ENCODE measurements at regions of chr4 and their contacts with region 1.

Region 1: DNA sequence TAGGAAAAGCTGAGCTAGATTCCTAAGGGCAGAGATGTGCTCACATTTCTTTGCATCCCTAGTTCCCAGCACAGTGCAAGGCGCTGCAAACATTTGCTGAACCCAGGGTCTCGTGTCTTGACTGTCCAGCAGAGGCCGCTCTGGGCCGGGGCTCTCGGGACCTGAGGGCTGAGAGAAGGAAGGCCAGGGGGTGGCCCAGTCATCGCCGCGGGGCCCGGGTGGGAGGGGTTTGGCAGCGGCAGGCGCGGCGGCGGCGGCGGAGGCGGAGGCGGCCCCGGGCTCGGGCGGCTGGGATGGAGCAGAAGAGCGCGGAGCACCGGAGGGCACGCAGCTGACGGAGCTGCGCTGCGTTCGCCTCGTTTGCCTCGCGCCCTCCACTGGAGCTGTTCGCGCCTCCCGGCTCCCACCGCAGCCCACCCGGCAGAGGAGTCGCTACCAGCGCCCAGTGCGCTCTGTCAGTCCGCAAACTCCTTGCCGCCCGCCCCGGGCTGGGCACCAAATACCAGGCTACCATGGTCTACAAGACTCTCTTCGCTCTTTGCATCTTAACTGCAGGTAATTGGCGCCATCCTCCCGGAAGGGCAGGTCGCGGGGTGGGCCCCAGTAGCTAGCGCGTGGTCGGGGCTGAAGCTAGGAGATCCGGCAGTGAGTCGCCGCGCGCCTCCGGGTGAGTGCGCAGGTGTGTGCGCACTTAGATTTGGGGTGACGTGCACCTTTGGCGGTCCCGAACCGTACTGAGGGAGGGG is at the start of gene PARM1:
- DNase-seq: peak; percentile 97
- H3K4me3 ChIP-seq: peak within 1 kb of the TSS; percentile 59 to 76 (median 70)
- H3K27ac ChIP-seq: peak within 1 kb of the TSS; percentile 85 to 92 (median 88)
- H3K4me1 ChIP-seq: peaks cover 0 to 16% (median 8%) of the 10 kb centered on the region in 4 donors
- H3K27me3 ChIP-seq: peaks cover 5% of the 10 kb centered on the region
- CTCF ChIP-seq: peak; percentile 75 to 89 (median 76)
- EP300 ChIP-seq: no peak
- POLR2A ChIP-seq: peak; percentile 79
- total RNA-seq, gene PARM1: 61.7 to 183 (median 120) TPM

Region 2: DNA sequence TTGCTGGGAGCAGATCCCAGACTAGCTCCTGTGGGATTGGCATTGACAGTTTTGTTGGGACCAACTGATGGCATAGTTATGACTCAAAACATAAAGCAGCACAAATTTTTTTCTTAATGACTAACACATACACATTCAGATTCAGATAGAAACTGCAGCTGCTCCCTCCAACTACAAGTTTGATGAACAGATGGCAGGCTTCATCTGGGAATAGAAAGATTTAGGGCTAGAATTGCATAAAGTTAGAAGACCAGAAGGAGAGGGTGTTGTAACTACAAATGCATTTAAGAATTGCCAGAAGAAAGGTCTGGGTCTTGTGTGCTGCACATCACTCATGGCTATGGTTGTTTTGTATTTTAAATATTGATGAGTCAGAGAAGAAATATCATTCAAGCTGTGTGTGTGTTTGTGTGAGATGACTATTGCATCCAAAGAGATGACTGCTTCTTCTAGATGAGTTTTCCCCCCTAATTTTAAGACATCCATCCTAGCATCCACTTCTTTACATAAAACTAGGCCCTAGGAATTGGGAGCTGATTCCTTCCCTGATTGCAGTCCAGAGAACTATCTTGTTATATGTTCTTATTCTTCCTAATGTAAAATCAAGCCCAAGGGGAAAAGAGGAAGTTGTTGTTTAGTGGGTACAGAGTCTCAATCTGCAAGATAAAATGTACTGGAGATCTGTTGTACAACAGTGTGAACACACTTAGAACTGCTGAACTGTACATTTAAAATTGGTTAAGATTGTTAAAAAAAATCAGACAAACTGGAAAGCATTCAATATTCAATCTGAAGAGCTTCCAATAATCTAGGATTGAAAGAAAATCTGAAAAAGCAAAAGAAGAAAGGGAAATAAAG is 175.0 kb after region 1 on chr4:
- in situ Hi-C with region 1: loop called in 1 of 4 experiments (anchors 25 kb)
- intact Hi-C with region 1: no loop called
- DNase-seq: no peak
- H3K4me3 ChIP-seq: no peak overlapping the region
- H3K27ac ChIP-seq: no peak overlapping the region
- H3K4me1 ChIP-seq: no peaks in the 10 kb centered on the region
- H3K27me3 ChIP-seq: no peaks in the 10 kb centered on the region
- CTCF ChIP-seq: no peak
- EP300 ChIP-seq: no peak
- POLR2A ChIP-seq: no peak

Region 3: GRCh38 chr4:75289914-75290582 is 357.1 kb after region 1 on chr4:
- in situ Hi-C with region 1: loop called in 1 of 4 experiments (anchors 10 kb)
- intact Hi-C with region 1: no loop called
- DNase-seq: peak; percentile 14
- H3K4me3 ChIP-seq: no peak overlapping the region
- H3K27ac ChIP-seq: no peak overlapping the region
- H3K4me1 ChIP-seq: peaks cover 0 to 15% (median 9%) of the 10 kb centered on the region in 4 donors
- H3K27me3 ChIP-seq: no peaks in the 10 kb centered on the region
- CTCF ChIP-seq: peak; percentile 33 to 64 (median 47)
- EP300 ChIP-seq: no peak
- POLR2A ChIP-seq: no peak

Region 4: DNA sequence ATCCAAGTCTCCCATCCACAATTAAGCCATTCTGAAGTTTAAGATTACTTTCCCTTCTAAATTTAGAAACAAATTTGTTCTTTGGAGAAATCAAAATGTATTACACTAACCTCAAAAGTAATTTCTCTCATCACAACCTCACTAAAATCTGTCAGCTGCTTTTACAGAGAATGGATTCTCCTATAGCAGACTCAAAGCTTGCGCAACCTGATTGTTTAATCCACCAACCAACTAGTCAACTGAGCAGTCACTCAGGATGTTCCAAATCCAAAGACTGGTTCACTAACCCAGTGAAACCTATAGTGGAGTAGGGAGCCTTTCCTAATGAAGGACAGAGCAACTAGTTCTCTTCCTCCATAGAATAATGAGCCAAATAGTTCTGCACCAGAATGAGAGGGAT is 536.9 kb after region 1 on chr4:
- in situ Hi-C with region 1: loop called in 1 of 4 experiments (anchors 10 kb)
- intact Hi-C with region 1: no loop called
- DNase-seq: no peak
- H3K4me3 ChIP-seq: no peak overlapping the region
- H3K27ac ChIP-seq: no peak overlapping the region
- H3K4me1 ChIP-seq: no peaks in the 10 kb centered on the region
- H3K27me3 ChIP-seq: no peaks in the 10 kb centered on the region
- CTCF ChIP-seq: no peak
- EP300 ChIP-seq: no peak
- POLR2A ChIP-seq: no peak

Region 5: GRCh38 chr4:76799140-76799539 is 1866.2 kb after region 1 on chr4:
- in situ Hi-C with region 1: no loop called
- intact Hi-C with region 1: no loop called
- DNase-seq: no peak
- H3K4me3 ChIP-seq: no peak overlapping the region
- H3K27ac ChIP-seq: no peak overlapping the region
- H3K4me1 ChIP-seq: no peaks in the 10 kb centered on the region
- H3K27me3 ChIP-seq: no peaks in the 10 kb centered on the region
- CTCF ChIP-seq: no peak
- EP300 ChIP-seq: no peak
- POLR2A ChIP-seq: no peak